ENCODE measurements at regions of chr15 and their contacts with region 1.

Region 1: DNA sequence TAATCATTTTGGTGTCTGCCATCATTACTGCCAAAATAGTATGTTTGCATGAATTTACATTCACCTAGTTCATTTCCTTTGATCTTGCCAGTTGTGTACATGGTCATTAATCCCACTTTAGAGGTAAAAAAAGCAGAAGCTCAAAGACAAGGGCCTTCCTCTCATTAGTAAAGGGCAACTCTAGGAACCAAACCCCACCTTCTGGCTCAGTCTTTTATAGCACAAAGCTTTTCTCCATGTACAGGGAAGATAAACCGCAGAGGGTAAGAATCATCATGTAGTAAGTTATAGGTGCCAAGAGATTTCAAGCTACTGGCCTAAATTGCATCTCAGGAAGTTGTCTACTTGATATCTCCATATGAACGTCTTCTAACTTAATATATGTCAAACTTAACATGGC is 19.3 kb upstream of the SPG21 start:
- DNase-seq: no peak
- ATAC-seq: no peak
- H3K4me3 ChIP-seq: no peak overlapping the region
- H3K27ac ChIP-seq: no peak overlapping the region
- H3K4me1 ChIP-seq: no peaks in the 10 kb centered on the region
- H3K27me3 ChIP-seq: no peaks in the 10 kb centered on the region
- CTCF ChIP-seq: no peak; the same call in 1 of the 2 replicates

Region 2: GRCh38 chr15:63135804-63136203 is 1873.2 kb before region 1 on chr15:
- CTCF ChIA-PET with region 1: interaction called, 14 read pairs
- POLR2A ChIA-PET with region 1: no interaction called
- in situ Hi-C with region 1: no loop called
- intact Hi-C with region 1: no loop called
- DNase-seq: peak; percentile 86
- ATAC-seq: peak; percentile 64; the same call in 1 of the 2 replicates
- H3K4me3 ChIP-seq: no peak overlapping the region
- H3K27ac ChIP-seq: no peak overlapping the region
- H3K4me1 ChIP-seq: no peaks in the 10 kb centered on the region
- H3K27me3 ChIP-seq: no peaks in the 10 kb centered on the region
- CTCF ChIP-seq: no peak

Region 3: DNA sequence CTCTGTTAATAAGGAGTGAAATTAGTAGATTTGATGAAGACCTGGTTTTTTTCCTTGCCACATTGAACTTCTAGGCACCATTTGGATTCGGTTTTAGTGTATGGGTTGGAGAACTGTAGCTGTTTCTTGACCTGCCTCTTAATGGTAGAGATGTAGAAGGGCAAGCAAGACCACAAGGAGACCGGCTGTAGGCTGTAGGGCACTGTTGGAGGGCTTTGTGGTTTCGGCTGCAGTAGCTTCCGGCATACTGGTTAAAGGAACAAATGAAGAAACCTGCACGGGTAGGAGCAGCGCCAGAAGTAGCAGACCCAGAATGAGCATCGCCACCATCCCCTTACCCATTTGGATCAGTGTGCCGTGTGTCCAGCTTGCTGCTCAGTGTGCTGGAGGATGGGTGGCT is 635.6 kb before region 1 on chr15:
- CTCF ChIA-PET with region 1: no interaction called
- POLR2A ChIA-PET with region 1: interaction called, 10 read pairs
- in situ Hi-C with region 1: no loop called
- intact Hi-C with region 1: no loop called
- DNase-seq: no peak
- ATAC-seq: no peak
- H3K4me3 ChIP-seq: no peak overlapping the region
- H3K27ac ChIP-seq: no peak overlapping the region
- H3K4me1 ChIP-seq: no peaks in the 10 kb centered on the region
- H3K27me3 ChIP-seq: no peaks in the 10 kb centered on the region
- CTCF ChIP-seq: no peak

Region 4: GRCh38 chr15:64558460-64559179 is 450.4 kb before region 1 on chr15:
- CTCF ChIA-PET with region 1: no interaction called
- POLR2A ChIA-PET with region 1: no interaction called
- in situ Hi-C with region 1: no loop called
- intact Hi-C with region 1: no loop called
- DNase-seq: no peak
- ATAC-seq: no peak
- H3K4me3 ChIP-seq: no peak overlapping the region
- H3K27ac ChIP-seq: no peak overlapping the region
- H3K4me1 ChIP-seq: no peaks in the 10 kb centered on the region
- H3K27me3 ChIP-seq: no peaks in the 10 kb centered on the region
- CTCF ChIP-seq: no peak

Measured in Panc1 (cell line).